Motor neuron (in vitro differentiated cells): ENCODE measurements at regions of chr6 and their contacts with region 1.

Region 1: DNA sequence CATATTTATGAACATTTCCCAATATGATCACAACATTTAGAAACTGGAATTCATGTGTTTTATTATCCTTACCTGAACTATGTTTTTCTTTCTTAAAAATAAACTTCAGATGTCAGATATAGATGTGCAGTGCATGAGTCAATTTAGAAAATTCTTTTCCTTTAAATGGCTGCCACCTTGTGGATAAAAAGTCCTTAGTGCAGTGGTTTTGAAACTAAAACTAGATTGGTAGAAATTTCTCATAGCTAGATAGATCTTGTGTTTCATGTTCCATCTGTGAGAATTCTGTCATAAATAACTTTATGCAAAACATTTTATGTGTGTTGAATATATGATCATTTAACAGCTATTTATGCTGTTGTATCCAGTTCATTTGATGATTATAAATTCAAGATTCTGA is 134.9 kb downstream of the KLHL32 start:
- ATAC-seq: peak in 3 of 8 experiments; percentile 57 to 70 (median 65)
- H3K4me3 ChIP-seq: no peak overlapping the region
- H3K27ac ChIP-seq: no peak overlapping the region
- H3K4me1 ChIP-seq: no peaks in the 10 kb centered on the region

Region 2: DNA sequence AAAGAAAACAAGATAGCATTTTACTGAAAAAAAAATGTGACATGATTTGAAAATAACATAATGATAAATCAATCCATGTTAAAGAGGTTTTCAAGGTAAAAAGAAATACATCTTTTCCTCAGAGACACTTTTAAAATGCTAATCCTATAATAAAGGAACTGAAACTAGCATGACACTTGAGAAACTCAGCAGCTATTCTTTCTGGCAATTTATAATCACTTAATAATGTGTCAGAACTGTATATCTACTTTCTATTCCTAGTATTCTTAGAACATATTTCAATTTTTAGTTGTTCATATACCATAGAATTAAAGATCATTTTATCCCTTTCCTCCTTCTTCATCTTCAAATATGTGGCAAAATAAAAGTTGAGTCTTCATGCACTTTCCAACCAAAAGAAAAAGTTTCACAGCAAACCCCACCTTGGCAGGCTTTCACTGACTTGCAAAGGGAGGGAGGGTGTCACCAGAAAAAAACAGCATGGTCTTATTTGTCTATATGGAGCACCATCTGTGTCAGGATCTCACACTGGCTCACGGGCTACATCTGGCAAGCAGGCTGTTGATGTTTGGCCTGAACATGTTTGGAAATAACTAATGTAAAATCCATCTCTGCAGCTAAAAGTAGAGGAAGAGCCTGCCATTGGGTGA is 448.0 kb before region 1 on chr6:
- in situ Hi-C with region 1: loop called in 1 of 9 experiments (anchors 25 kb)
- ATAC-seq: peak in 2 of 8 experiments; percentile 39 to 80
- H3K4me3 ChIP-seq: no peak overlapping the region
- H3K27ac ChIP-seq: no peak overlapping the region
- H3K4me1 ChIP-seq: peaks cover 0 to 8% of the 10 kb centered on the region in 2 donors

Region 3: DNA sequence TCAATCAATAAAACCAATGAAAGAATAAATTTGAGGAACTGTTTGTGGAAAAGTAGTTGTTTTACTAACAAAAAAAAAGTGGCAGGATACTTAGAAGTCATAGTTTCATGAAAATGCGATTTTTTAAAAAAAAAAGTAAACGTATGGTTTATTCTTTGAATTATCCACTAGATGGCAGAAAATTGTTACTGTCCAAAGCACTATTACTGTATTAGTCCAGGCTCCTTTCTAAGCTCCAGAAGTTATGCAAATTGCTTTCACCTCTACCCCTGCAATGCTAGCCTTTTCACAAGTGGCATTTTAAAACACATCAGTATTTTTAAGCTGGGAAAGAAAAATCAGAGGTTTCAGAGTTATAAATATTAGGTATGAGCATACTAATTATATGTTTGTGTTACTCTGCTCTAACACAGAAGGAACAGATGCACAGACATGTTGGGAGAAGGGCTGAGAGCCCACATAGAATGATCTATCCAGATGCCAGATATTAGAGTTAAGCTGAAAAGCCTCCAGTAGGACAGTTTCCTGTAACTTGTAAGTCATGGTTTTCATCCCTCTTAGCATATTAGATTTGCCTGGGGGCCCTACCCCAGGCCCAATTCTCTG is 432.6 kb before region 1 on chr6:
- in situ Hi-C with region 1: loop called in 4 of 9 experiments (anchors 10 to 25 kb)
- ATAC-seq: peak; percentile 67 to 86 (median 77)
- H3K4me3 ChIP-seq: no peak overlapping the region
- H3K27ac ChIP-seq: no peak overlapping the region
- H3K4me1 ChIP-seq: peaks cover 0 to 3% of the 10 kb centered on the region in 2 donors

Region 4: DNA sequence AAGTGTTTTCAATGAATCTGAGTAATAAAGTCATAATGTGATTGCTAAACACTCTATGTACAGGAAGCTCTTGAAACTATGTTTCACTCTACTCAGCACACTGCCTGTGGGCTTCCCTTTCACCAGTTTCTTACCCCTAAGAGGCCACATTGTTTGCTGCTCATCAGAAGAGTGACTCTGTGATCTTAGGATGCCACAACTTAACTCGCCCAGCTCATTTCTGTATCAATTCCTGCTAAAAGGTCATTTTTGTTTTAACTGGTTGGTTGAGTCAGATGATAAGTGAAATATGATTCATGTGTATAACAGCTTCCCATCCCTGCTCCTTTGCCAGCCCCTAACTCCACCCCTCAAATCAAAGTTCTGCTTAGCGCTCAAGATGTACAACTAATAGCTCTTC is 152.0 kb before region 1 on chr6:
- in situ Hi-C with region 1: loop called in 7 of 9 experiments (anchors 5 to 25 kb)
- ATAC-seq: no peak
- H3K4me3 ChIP-seq: no peak overlapping the region
- H3K27ac ChIP-seq: no peak overlapping the region
- H3K4me1 ChIP-seq: no peaks in the 10 kb centered on the region

Region 5: DNA sequence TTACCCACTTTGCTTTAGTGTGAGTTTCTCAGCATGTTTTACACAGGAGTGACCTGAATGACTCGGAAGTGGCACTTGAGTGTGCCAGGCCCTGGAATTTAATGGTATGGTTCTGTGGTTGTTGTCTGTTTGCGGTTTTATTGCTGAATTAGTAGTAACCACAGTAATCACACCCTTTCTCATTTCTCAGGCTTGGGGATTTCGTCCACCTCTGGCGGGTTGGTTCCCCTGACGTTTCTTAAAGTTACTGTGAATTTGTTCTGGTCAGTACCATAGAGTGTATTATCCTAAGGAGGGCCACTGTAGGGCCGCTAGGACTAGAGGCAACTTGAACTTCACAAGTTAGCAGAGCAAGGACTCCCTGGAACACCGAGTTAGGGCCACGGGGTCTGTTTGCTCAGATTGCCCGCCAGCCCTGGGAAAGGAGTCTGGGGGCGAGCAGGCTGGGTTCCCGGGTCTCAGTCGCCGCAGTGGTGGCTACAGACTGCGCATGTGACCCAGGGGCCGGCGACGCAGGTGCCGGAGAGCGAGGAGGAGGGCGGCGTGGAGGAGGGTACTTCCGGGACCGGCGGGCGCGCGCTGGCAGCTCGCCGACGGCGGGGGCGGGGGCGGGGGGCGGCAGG is 135.5 kb before region 1 on chr6:
- in situ Hi-C with region 1: loop called in 3 of 9 experiments (anchors 25 kb)
- ATAC-seq: peak; percentile 38 to 84 (median 82)
- H3K4me3 ChIP-seq: peak overlapping the region; percentile 41 to 61 (median 52)
- H3K27ac ChIP-seq: peak overlapping the region; percentile 12 to 77
- H3K4me1 ChIP-seq: peaks cover 2 to 11% of the 10 kb centered on the region in 2 donors

Region 6: DNA sequence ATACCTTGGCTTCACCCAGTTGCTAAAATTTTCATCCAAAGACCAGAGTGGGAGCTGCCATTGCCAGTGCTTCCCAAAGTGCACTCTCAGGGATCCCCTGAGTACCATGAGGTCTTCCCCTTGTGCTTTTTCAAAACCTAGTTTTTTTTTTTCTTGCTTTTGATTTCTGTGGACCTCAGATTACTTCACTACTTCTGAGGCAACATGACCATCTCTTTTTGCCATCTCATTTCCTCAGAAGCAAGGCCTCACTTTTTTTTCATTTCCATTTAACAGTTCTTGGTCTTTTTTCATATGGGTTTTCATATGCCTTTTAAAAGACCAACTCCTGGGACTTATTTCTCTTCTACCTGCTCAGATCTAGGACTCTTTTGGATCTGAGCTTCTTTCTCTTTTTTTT is 287.6 kb after region 1 on chr6:
- in situ Hi-C with region 1: no loop called
- ATAC-seq: no peak
- H3K4me3 ChIP-seq: no peak overlapping the region
- H3K27ac ChIP-seq: no peak overlapping the region
- H3K4me1 ChIP-seq: no peaks in the 10 kb centered on the region

Region 7: DNA sequence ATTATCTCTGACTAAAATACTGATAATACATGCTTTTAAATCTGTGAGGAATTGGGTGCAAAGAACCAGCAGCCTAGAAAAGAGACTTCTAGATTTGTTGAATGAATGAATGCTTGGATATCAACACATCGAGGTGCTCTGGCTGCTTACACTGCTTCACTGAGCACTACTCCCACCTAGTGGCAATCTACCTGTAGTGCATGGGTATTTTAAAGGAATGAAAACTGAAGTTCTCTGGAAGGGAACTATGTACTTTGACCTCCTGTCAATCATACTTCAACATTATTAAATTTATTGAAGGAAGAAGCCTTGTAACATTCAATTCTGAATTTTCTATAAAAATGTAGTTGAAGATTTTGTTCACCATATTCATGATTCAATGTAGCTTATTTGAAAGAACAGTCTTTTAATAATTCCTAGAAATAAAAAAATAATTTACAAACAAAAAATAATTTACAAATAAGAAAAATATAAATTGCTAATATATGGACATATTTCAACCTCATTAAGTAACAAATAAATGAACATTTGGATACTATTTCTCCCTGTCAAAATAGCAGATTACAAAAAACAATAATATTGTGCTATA is 334.8 kb after region 1 on chr6:
- in situ Hi-C with region 1: loop called in 1 of 9 experiments (anchors 25 kb)
- ATAC-seq: peak in 5 of 8 experiments; percentile 22 to 71 (median 45)
- H3K4me3 ChIP-seq: no peak overlapping the region
- H3K27ac ChIP-seq: no peak overlapping the region
- H3K4me1 ChIP-seq: no peaks in the 10 kb centered on the region